ENCODE measurements at regions of chr22 and their contacts with region 1.

Region 1: GRCh38 chr22:49960159-49961004 is at the start of gene PIM3:
- DNase-seq: peak; percentile 93 to 95 (median 94)
- H3K4me3 ChIP-seq: peak within 1 kb of the TSS; percentile 69 to 88
- H3K4me3 Mint-ChIP-seq: peak within 1 kb of the TSS; percentile 85 to 93 (median 90)
- H3K27ac ChIP-seq: peak within 1 kb of the TSS; percentile 98
- H3K27ac Mint-ChIP-seq: peak within 1 kb of the TSS; percentile 92 to 96 (median 94)
- H3K4me1 ChIP-seq: peaks cover 31% of the 10 kb centered on the region
- H3K4me1 Mint-ChIP-seq: peaks cover 4 to 42% (median 17%) of the 10 kb centered on the region in 4 donors
- H3K27me3 ChIP-seq: no peaks in the 10 kb centered on the region
- H3K27me3 Mint-ChIP-seq: peaks cover 0 to 3% of the 10 kb centered on the region in 2 donors
- total RNA-seq, gene PIM3: 58.8 to 62.3 TPM

Region 2: GRCh38 chr22:49838771-49839717 is 121.3 kb before region 1 on chr22:
- CTCF ChIA-PET with region 1: no interaction called
- POLR2A ChIA-PET with region 1: interaction called, 9 read pairs
- intact Hi-C with region 1: loop called (anchors 5 kb)
- DNase-seq: peak; percentile 91 to 98 (median 95)
- H3K4me3 ChIP-seq: peak overlapping the region; percentile 7 to 53
- H3K4me3 Mint-ChIP-seq: peak overlapping the region; percentile 71 to 91 (median 84)
- H3K27ac ChIP-seq: peak overlapping the region; percentile 79
- H3K27ac Mint-ChIP-seq: peak overlapping the region; percentile 80 to 99 (median 97)
- H3K4me1 ChIP-seq: peaks cover 31% of the 10 kb centered on the region
- H3K4me1 Mint-ChIP-seq: peaks cover 16 to 38% (median 25%) of the 10 kb centered on the region in 4 donors
- H3K27me3 ChIP-seq: no peaks in the 10 kb centered on the region
- H3K27me3 Mint-ChIP-seq: no peaks in the 10 kb centered on the region

Region 3: DNA sequence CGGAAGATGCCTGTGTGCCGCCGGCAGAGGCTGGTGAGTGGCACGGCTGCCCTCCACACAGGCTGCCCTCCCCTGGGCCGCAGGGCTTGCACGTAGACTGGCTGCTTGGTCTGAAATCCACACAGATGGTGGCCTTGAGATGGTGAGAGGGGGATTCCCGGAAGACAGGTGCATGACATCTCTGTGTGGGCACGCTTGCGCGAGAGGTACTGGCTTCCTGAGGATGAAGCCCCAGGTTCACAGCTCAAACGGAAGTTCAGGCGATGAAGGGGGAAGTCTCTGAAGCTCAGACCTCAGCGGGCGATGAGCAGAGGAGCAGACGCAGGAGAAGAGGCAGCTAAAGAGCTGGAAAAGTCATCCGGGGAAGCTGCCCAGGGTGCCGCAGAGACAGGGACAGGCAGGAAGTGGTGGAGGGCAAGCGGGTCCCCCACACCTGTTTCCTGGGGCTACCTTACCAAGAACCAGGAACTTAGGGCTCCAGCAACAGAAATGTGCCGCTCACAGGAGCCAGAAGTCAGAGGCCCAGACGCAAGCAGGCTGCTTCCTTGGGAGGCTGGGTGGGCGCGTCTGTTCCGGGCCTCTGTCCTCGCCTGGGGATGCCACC is 34.8 kb before region 1 on chr22:
- CTCF ChIA-PET with region 1: interaction called, 8 read pairs
- POLR2A ChIA-PET with region 1: interaction called, 54 read pairs
- intact Hi-C with region 1: no loop called
- DNase-seq: peak; percentile 82 to 94 (median 84)
- H3K4me3 ChIP-seq: peak overlapping the region; percentile 26 to 48
- H3K4me3 Mint-ChIP-seq: peak overlapping the region; percentile 75 to 88 (median 84)
- H3K27ac ChIP-seq: peak overlapping the region; percentile 91
- H3K27ac Mint-ChIP-seq: peak overlapping the region; percentile 94 to 100 (median 95)
- H3K4me1 ChIP-seq: peaks cover 27% of the 10 kb centered on the region
- H3K4me1 Mint-ChIP-seq: peaks cover 16 to 48% (median 32%) of the 10 kb centered on the region in 4 donors
- H3K27me3 ChIP-seq: no peaks in the 10 kb centered on the region
- H3K27me3 Mint-ChIP-seq: no peaks in the 10 kb centered on the region

Region 4: DNA sequence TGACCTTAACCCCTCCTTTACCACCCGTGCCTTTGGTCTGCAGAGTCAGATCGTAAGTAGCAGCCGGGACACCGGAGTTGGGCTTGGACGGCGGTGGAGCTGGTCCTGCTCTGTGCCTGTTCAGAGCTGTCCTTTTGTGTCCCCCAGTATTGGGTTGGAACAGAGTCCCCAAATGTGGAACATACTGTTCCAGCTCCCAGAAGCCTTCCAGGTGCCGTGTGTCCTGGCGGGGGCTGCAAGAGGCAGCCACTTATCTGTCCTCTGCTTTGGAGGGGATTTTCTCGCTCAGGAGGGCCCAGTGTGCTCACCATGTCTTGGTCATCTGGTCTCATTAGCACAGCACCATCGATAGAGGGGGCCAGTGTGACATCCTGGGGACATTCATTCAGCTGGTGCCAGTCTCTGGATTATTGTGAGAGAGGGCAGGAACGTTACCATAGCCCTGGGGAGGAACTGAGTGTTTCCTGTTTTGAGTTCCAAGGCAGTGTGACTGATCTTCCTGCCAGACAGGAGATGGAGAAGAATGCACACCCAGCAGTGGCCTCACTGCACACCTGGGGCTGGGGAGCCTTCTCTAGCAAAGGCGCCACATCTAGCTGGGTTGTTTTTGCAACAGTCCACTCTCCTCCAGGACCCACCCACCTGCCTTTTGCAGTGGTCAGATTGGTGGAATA is 29.5 kb before region 1 on chr22:
- CTCF ChIA-PET with region 1: interaction called, 8 read pairs
- POLR2A ChIA-PET with region 1: interaction called, 80 read pairs
- intact Hi-C with region 1: loop called (anchors 1 kb)
- DNase-seq: peak in 3 of 5 donors; percentile 30 to 45 (median 40)
- H3K4me3 ChIP-seq: no peak overlapping the region
- H3K4me3 Mint-ChIP-seq: peak overlapping the region; percentile 4 to 80 (median 55)
- H3K27ac ChIP-seq: no peak overlapping the region
- H3K27ac Mint-ChIP-seq: peak overlapping the region; percentile 54 to 93 (median 88)
- H3K4me1 ChIP-seq: peaks cover 51% of the 10 kb centered on the region
- H3K4me1 Mint-ChIP-seq: peaks cover 20 to 49% (median 31%) of the 10 kb centered on the region in 4 donors
- H3K27me3 ChIP-seq: no peaks in the 10 kb centered on the region
- H3K27me3 Mint-ChIP-seq: no peaks in the 10 kb centered on the region

Region 5: GRCh38 chr22:49936018-49936952 is 24.1 kb before region 1 on chr22:
- CTCF ChIA-PET with region 1: interaction called, 8 read pairs
- POLR2A ChIA-PET with region 1: interaction called, 80 read pairs
- intact Hi-C with region 1: loop called (anchors 1 kb)
- DNase-seq: peak; percentile 89 to 98 (median 91)
- H3K4me3 ChIP-seq: peak overlapping the region in 1 of 2 donors; percentile 18
- H3K4me3 Mint-ChIP-seq: peak overlapping the region; percentile 45 to 74 (median 68)
- H3K27ac ChIP-seq: peak overlapping the region; percentile 90
- H3K27ac Mint-ChIP-seq: peak overlapping the region; percentile 88 to 95 (median 90)
- H3K4me1 ChIP-seq: peaks cover 46% of the 10 kb centered on the region
- H3K4me1 Mint-ChIP-seq: peaks cover 9 to 42% (median 17%) of the 10 kb centered on the region in 4 donors
- H3K27me3 ChIP-seq: no peaks in the 10 kb centered on the region
- H3K27me3 Mint-ChIP-seq: no peaks in the 10 kb centered on the region

Region 6: GRCh38 chr22:49970528-49971231 is 10.3 kb after region 1 on chr22:
- CTCF ChIA-PET with region 1: interaction called, 3 read pairs
- POLR2A ChIA-PET with region 1: interaction called, 90 read pairs
- intact Hi-C with region 1: no loop called
- DNase-seq: peak; percentile 88 to 99 (median 89)
- H3K4me3 ChIP-seq: peak overlapping the region in 1 of 2 donors; percentile 49
- H3K4me3 Mint-ChIP-seq: peak overlapping the region; percentile 77 to 83 (median 80)
- H3K27ac ChIP-seq: peak overlapping the region; percentile 56
- H3K27ac Mint-ChIP-seq: peak overlapping the region; percentile 63 to 98 (median 94)
- H3K4me1 ChIP-seq: peaks cover 36% of the 10 kb centered on the region
- H3K4me1 Mint-ChIP-seq: peaks cover 13 to 29% (median 14%) of the 10 kb centered on the region in 4 donors
- H3K27me3 ChIP-seq: no peaks in the 10 kb centered on the region
- H3K27me3 Mint-ChIP-seq: peaks cover 0 to 4% of the 10 kb centered on the region in 2 donors

Region 7: DNA sequence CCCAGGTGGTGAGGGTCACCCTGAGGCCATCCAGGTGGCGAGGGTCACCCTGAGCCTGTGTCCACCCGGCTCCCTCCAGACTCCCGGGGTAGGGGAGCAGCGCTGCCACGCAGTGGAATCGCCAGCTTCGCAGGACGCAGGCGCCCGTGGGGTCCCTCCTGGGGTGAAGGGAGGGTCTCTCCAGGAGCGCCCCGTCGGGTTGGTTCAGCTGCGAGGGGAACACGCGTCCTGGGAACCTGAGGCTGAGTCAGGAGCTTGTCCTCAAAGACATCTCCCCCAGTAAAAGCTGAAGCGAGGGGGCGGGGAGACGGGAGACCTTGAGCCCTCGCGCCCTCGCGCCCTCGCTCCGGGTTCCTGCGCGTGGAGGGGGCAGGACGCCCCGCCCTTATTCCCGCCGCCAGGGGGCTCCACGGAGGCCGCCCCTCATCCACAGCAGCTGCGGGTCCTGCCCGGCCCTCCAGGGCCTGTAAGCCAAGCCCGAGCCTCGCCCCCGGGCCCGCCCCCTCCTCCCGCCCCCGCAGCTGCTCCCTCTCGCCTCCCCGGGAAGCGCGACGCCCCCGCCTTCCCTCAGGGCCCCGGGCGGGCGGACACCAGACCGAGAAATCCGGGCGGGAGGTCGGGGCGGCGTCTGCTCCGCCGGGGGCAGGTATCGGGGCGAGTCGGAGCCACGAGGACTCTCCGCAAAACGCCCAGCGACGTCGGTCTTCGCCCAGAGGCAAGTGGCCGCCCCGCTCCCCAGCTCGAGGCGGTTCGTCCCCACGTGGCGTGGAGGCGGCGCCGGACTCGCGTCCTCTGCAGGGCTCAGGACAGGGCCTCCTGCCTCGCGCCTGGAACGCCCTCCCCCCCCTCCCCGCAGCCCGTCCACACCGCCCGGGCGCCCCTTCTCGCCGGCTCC is 23.0 kb after region 1 on chr22:
- CTCF ChIA-PET with region 1: no interaction called
- POLR2A ChIA-PET with region 1: interaction called, 27 read pairs
- intact Hi-C with region 1: no loop called
- DNase-seq: peak in 2 of 5 donors; percentile 34 to 61
- H3K4me3 ChIP-seq: no peak overlapping the region
- H3K4me3 Mint-ChIP-seq: peak overlapping the region in 1 of 8 donors; percentile 65
- H3K27ac ChIP-seq: no peak overlapping the region
- H3K27ac Mint-ChIP-seq: peak overlapping the region in 1 of 7 donors; percentile 14
- H3K4me1 ChIP-seq: no peaks in the 10 kb centered on the region
- H3K4me1 Mint-ChIP-seq: peaks cover 5 to 12% (median 6%) of the 10 kb centered on the region in 4 donors
- H3K27me3 ChIP-seq: peaks cover 6% of the 10 kb centered on the region
- H3K27me3 Mint-ChIP-seq: peaks cover 10 to 18% of the 10 kb centered on the region in 2 donors

Region 8: DNA sequence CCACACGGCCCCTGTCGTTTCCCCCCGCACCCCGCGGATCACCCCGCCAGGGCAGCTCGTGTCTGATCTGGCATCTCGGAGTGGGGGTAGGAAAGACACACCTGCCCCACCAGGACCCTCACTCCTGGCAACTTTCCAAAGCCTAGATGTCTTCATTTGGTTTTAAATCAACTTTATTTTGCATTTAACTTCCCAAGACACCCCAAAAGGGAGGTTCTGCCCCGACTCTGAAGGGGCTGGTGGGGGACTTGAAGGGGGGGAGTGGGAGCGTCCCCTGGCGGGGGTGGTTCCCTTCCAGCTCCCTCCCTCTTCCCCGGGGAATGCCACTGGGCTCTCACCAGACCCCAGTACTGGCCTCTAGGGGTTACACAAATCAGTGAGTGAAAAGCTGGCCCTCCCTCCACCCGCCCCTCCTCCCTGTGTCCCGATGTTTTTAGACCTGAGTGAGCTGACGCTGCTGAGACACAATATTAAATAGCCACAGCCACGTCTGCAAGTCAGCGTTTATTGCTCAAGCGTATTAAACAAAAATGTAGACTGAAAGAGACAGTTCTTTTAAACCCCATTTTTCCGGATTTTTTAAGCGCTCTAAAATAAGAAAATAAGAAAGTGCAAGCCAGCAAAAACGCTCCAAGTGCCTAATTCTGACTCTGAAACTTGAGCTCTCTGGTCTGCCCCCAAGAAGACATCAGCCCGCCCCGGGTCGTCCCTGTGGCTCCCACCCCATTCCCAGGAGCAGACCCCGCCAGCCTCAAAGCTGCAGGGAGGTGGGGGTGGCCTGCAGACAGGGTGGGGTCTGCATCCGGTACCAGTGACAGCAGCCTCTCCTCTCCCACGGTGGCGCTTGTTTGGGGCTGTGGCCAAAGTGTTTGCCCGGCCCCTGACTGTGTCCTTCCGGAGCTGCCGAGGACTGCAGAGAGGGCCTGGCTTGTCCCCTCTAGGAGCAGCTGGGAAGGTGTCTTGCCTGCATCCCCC is 98.8 kb after region 1 on chr22:
- CTCF ChIA-PET with region 1: no interaction called
- POLR2A ChIA-PET with region 1: no interaction called
- intact Hi-C with region 1: no loop called
- DNase-seq: no peak
- H3K4me3 ChIP-seq: no peak overlapping the region
- H3K4me3 Mint-ChIP-seq: no peak overlapping the region
- H3K27ac ChIP-seq: no peak overlapping the region
- H3K27ac Mint-ChIP-seq: no peak overlapping the region
- H3K4me1 ChIP-seq: no peaks in the 10 kb centered on the region
- H3K4me1 Mint-ChIP-seq: no peaks in the 10 kb centered on the region
- H3K27me3 ChIP-seq: peaks cover 5% of the 10 kb centered on the region
- H3K27me3 Mint-ChIP-seq: peaks cover 14 to 30% of the 10 kb centered on the region in 2 donors